Ascending aorta (tissue), 2 donors: ENCODE measurements at regions of chr12 and their contacts with region 1.

Region 1: GRCh38 chr12:11836282-11837151 is 187.0 kb downstream of the ETV6 start:
- DNase-seq: peak in 1 of 2 donors; percentile 76
- H3K4me3 ChIP-seq: no peak overlapping the region
- H3K27ac ChIP-seq: peak overlapping the region; percentile 50 to 55
- H3K4me1 ChIP-seq: peaks cover 10 to 80% of the 10 kb centered on the region in 2 donors
- H3K27me3 ChIP-seq: no peaks in the 10 kb centered on the region
- CTCF ChIP-seq: no peak

Region 2: DNA sequence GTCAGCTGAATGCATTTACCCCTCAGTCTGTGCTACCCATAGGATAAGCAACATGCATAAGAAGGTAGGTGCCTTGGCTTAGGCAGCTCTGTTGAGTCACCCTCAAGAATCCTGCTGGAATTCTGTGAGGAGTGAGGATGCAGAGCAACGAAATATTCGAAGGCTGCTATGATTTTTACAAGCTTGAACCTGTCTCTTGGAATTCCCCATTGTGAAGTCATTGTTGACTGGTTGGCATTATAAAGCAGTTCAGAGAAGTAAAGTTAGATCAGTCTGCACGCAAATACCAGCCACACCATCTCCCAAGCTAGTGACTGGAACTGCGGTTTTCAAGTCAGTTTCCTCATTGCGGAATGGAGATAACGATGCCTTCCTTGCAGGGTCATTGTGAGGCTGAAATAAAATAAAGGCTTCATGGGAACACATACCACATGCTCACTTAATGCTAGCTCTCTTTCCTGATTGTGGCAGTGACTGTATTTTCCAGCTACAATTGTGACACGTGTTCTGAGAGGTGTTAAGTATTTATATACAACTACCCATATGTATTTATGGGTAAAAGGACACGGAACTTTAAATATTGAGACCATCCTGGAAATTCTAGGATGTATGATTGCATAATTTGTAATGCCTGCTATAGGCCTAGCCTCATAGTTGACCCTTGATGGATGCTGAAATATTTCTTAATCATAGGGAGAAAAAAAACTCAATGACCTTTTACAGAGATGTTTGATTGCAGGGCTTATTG is 90.3 kb before region 1 on chr12:
- intact Hi-C with region 1: no loop called
- DNase-seq: no peak
- H3K4me3 ChIP-seq: no peak overlapping the region
- H3K27ac ChIP-seq: peak overlapping the region; percentile 19 to 22
- H3K4me1 ChIP-seq: peaks cover 0 to 34% of the 10 kb centered on the region in 2 donors
- H3K27me3 ChIP-seq: no peaks in the 10 kb centered on the region
- CTCF ChIP-seq: no peak

Region 3: GRCh38 chr12:11765817-11766794 is 70.4 kb before region 1 on chr12:
- intact Hi-C with region 1: no loop called
- DNase-seq: peak in 1 of 2 donors; percentile 81
- H3K4me3 ChIP-seq: peak overlapping the region in 1 of 2 donors; percentile 17
- H3K27ac ChIP-seq: peak overlapping the region; percentile 89
- H3K4me1 ChIP-seq: peaks cover 21 to 62% of the 10 kb centered on the region in 2 donors
- H3K27me3 ChIP-seq: no peaks in the 10 kb centered on the region
- CTCF ChIP-seq: no peak

Region 4: DNA sequence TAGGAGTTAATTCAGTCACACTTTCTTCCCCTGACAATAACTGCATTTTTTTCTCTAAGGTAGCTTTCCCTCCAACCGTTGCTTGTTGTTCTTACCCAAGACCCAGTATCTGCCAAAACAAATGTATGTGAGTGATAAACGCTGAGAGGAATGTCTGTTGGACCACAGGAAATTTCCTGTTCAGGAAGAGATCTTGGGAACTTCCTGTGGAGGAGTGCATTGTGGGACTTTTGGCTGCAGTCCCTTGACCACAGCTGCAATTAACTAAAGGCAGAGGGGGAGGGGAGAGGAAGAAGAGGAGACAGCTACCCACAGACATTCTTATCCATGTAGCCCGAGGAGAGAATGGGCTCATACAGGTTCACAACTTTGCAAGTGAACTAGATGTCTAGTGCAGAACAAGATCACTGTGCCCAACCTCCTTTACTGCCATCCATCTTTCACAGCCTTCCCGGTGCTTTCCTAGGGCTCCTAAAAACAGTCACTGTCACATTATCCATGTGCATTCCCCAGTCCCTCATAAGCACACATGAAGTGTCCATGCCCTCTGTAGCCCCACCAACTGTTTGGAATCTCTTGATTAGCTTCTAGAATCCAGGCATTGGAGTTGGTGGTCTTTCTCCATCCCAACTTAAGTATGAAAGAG is 37.5 kb before region 1 on chr12:
- intact Hi-C with region 1: loop called (anchors 5 kb)
- DNase-seq: no peak
- H3K4me3 ChIP-seq: no peak overlapping the region
- H3K27ac ChIP-seq: peak overlapping the region; percentile 80 to 91
- H3K4me1 ChIP-seq: peaks cover 19 to 34% of the 10 kb centered on the region in 2 donors
- H3K27me3 ChIP-seq: no peaks in the 10 kb centered on the region
- CTCF ChIP-seq: no peak

Region 5: DNA sequence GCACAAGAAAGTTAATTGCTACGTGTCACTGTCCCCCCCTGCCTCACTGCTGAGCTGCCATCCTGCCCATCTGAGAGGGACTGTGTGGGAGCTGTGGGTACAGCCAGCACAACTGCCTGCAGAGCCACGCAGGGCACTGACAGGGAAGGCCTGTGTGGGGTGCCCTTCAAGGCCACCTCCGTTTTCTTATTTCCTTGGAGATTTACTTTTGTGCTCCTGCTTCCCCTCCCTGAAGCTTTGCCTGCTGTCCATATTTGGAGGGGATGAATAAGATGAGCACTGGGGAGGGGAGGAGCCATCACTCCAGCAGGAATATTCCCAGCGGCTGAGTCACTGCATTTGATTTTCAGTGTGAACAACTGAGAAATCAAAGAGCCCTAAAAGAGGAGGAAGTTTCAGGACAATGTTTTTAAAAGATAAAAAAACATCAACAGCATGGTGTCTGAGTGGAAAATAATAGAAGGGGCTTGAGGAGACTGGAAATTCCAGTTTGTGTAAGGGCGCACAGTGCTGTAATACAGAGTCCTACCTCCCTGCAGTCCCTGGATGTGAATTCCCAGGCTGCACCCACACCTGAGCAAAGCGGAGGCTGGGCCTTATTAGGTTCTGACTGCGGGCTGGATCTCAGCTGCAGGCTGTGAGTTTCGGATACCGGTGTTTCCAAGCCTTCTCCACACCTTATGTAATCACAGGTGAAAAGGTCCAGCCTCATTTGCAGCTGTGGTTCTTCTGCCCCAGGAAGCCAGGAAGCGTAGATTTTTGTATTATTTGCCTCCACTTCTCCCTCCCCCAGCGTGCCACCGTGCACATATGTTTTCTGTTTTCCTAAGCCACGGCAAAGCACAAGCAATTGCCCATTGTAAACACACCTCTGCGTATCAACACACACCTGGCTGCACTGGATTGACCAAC is 41.6 kb after region 1 on chr12:
- intact Hi-C with region 1: loop called (anchors 5 kb)
- DNase-seq: peak in 1 of 2 donors; percentile 80
- H3K4me3 ChIP-seq: no peak overlapping the region
- H3K27ac ChIP-seq: peak overlapping the region; percentile 22 to 43
- H3K4me1 ChIP-seq: peaks cover 0 to 28% of the 10 kb centered on the region in 2 donors
- H3K27me3 ChIP-seq: no peaks in the 10 kb centered on the region
- CTCF ChIP-seq: no peak

Region 6: GRCh38 chr12:12032851-12033588 is 196.5 kb after region 1 on chr12:
- intact Hi-C with region 1: loop called (anchors 10 kb)
- DNase-seq: peak in 1 of 2 donors; percentile 86
- H3K4me3 ChIP-seq: peak overlapping the region; percentile 53 to 60
- H3K27ac ChIP-seq: peak overlapping the region; percentile 69 to 71
- H3K4me1 ChIP-seq: peaks cover 0 to 6% of the 10 kb centered on the region in 2 donors
- H3K27me3 ChIP-seq: no peaks in the 10 kb centered on the region
- CTCF ChIP-seq: peak; percentile 82 to 90 (median 88)